Adrenal gland (tissue), 19 donors: ENCODE measurements at regions of chr17 and their contacts with region 1.

Region 1: DNA sequence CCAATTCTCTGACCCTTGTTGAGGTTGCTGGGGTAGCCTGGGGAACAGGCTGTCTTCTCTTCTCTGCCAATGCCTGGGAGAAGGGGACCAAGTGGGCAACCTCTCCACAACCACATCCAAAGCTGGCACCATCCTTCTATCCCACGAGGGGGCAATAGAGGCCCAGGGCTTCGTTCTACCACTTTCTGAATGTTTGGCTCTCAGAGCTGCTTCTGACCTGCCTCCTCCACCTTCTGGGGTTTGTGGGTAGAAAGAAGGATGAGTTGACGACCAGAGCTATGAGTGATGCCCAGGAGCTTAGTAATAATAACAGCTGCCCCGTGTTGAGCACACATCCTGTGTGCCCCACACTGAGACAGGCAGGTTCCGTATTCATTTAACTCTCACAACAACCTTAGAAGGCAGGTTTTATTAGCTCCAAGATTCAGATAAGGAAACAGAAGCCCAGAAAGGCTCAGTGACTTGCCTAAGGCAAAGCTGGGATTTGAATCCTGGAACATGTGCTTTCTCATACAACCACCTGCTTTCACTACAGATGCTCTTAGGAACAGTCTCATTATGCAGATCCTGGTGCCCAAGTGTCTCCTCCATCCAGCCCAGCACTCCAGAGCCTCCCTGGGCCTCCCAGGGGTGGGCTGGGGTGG is 11.1 kb downstream of the TSPOAP1 start:
- DNase-seq: peak; percentile 40 to 74 (median 64)
- H3K4me3 ChIP-seq: no peak overlapping the region
- H3K27ac ChIP-seq: no peak overlapping the region
- H3K4me1 ChIP-seq: no peaks in the 10 kb centered on the region
- H3K27me3 ChIP-seq: no peaks in the 10 kb centered on the region
- CTCF ChIP-seq: peak; percentile 38 to 77 (median 67)
- POLR2A ChIP-seq: no peak

Region 2: DNA sequence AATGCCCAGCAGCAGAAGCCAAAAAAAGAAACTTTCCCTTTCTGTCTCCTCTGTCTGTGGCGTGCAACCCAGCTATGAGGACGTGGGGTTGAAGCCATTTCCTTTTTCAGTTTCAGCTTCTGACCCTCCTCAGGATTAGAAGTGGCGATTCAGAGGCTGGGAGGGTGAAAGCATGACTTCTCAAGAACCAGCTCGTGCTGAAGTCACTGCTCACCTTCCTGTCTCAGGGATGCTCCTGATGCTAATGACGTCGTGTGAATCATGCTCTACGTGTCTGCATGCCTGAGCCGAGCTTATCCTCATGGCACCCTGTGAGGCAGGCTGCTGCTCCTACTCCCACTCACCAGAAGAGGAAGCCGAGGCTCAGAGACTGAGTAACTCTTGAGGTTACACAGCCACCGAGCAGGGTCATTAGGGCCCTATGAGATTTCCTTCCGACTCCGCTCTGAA is 84.8 kb before region 1 on chr17:
- intact Hi-C with region 1: no loop called
- DNase-seq: peak in 4 of 7 donors; percentile 20 to 29 (median 24)
- H3K4me3 ChIP-seq: no peak overlapping the region
- H3K27ac ChIP-seq: no peak overlapping the region
- H3K4me1 ChIP-seq: no peaks in the 10 kb centered on the region
- H3K27me3 ChIP-seq: peaks cover 5% of the 10 kb centered on the region
- CTCF ChIP-seq: no peak
- POLR2A ChIP-seq: no peak

Region 3: DNA sequence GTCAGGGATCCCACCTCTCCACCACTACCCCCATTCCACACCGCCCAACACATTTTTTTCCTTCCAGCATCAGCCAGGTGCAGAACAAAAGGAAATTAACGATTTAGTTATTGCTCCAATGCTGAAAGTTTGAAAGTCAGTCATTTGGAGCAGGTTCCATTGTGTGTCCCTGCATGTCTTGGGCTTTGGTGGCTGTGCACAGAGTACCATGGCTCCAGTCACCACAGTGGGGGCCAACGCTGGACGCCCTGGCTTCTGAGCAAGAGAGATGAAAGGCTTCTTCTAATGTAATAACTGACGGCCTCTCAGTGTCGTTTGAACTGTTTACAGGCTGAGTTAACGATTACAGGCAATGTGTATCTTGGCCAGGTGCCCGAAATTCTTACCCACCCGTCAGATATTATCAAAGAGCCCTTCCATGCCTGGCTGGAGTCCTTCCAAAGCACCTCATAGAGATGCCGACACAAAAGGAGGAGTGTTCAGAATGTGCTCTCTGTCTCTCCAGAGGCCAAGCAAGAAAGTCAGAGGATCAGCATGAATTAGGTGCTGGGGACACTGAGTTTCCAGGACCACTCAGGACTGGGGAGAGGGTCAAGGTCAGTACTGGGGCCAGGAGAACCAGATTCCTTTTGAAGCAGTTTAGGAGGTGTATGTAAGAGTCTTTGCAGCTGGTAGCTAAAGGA is 73.9 kb after region 1 on chr17:
- intact Hi-C with region 1: no loop called
- DNase-seq: peak; percentile 67 to 95 (median 93)
- H3K4me3 ChIP-seq: no peak overlapping the region
- H3K27ac ChIP-seq: peak overlapping the region in 4 of 5 donors; percentile 26 to 72 (median 44)
- H3K4me1 ChIP-seq: peaks cover 9 to 25% of the 10 kb centered on the region in 2 donors
- H3K27me3 ChIP-seq: no peaks in the 10 kb centered on the region
- CTCF ChIP-seq: no peak
- POLR2A ChIP-seq: peak in 1 of 2 donors; percentile 41

Region 4: GRCh38 chr17:58447039-58447975 is 129.8 kb after region 1 on chr17:
- intact Hi-C with region 1: loop called (anchors 2 to 5 kb)
- DNase-seq: peak; percentile 78 to 91 (median 86)
- H3K4me3 ChIP-seq: no peak overlapping the region
- H3K27ac ChIP-seq: no peak overlapping the region
- H3K4me1 ChIP-seq: no peaks in the 10 kb centered on the region
- H3K27me3 ChIP-seq: no peaks in the 10 kb centered on the region
- CTCF ChIP-seq: peak; percentile 55 to 88 (median 78)
- POLR2A ChIP-seq: no peak